ENCODE measurements at regions of chr9 and their contacts with region 1.

Region 1: GRCh38 chr9:110623462-110624025 is 44.0 kb upstream of the SVEP1 start:
- DNase-seq: peak; percentile 32
- ATAC-seq: no peak
- H3K4me3 Mint-ChIP-seq: no peak overlapping the region
- H3K27ac Mint-ChIP-seq: no peak overlapping the region
- H3K4me1 Mint-ChIP-seq: peaks cover 11% of the 10 kb centered on the region
- H3K27me3 Mint-ChIP-seq: no peaks in the 10 kb centered on the region
- CTCF ChIP-seq: peak; percentile 69

Region 2: DNA sequence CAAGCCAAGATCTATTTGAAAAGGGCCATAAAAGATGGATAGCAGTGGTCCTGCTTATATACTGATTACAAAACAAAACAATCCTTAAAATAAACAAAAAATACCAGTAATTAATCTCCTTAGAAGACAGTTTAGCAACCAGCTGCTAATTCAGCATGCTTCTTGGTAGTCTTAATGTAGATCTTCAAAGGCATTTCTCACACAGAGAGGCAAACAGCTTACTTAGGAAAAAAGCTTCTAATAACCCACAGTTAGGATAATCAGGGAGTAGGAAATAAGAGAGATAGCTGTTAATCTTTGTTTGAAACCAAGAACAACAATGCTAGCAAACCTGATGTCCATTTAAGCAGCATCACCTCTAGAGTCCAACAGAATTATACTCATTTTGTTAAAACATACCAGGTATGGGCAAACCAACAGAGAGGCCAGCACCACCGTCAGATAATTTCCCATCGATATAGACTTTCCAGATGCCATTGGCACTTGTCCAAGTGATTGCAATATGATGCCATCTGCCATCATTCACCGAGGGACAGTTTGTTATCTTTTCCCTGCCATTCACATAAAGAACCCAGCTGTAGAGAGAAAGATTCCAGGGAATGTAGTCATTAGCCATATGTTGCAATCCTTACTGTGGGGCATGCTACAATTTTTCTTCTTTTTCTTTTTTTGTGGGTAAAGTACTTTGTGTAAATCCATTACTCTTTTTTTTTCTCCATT is 180.2 kb before region 1 on chr9:
- CTCF ChIA-PET with region 1: no interaction called
- POLR2A ChIA-PET with region 1: no interaction called
- intact Hi-C with region 1: loop called (anchors 10 kb)
- DNase-seq: no peak
- ATAC-seq: no peak
- H3K4me3 Mint-ChIP-seq: no peak overlapping the region
- H3K27ac Mint-ChIP-seq: no peak overlapping the region
- H3K4me1 Mint-ChIP-seq: no peaks in the 10 kb centered on the region
- H3K27me3 Mint-ChIP-seq: peaks cover 2% of the 10 kb centered on the region
- CTCF ChIP-seq: no peak

Region 3: DNA sequence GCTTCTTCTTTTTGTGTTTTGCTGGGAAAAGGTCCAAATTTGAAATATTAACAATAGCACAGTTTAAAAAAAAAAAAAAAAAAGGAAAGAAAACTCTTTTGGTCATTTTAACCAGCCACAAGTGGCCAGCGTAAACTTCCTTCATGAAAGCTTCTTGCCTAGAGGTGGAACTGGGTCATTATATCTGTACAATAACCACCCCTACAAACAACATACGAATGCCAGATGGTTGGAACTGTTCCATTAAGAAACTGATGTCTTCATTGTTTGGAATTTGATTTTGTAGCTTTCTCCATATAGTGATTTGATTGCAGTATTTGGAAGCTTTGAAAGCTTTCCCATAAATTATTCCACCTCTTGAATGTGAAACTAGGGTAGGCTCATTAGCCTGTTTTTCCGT is 433.0 kb after region 1 on chr9:
- CTCF ChIA-PET with region 1: no interaction called
- POLR2A ChIA-PET with region 1: no interaction called
- intact Hi-C with region 1: no loop called
- DNase-seq: no peak
- ATAC-seq: no peak
- H3K4me3 Mint-ChIP-seq: no peak overlapping the region
- H3K27ac Mint-ChIP-seq: no peak overlapping the region
- H3K4me1 Mint-ChIP-seq: no peaks in the 10 kb centered on the region
- H3K27me3 Mint-ChIP-seq: no peaks in the 10 kb centered on the region
- CTCF ChIP-seq: no peak

Measured in activated CD8-positive, alpha-beta T cell treated with anti-CD3 and anti-CD28 coated beads for 36 hours (primary cell).